Left ventricle myocardium superior (tissue), 1 donor: ENCODE measurements at regions of chr12 and their contacts with region 1.

Region 1: DNA sequence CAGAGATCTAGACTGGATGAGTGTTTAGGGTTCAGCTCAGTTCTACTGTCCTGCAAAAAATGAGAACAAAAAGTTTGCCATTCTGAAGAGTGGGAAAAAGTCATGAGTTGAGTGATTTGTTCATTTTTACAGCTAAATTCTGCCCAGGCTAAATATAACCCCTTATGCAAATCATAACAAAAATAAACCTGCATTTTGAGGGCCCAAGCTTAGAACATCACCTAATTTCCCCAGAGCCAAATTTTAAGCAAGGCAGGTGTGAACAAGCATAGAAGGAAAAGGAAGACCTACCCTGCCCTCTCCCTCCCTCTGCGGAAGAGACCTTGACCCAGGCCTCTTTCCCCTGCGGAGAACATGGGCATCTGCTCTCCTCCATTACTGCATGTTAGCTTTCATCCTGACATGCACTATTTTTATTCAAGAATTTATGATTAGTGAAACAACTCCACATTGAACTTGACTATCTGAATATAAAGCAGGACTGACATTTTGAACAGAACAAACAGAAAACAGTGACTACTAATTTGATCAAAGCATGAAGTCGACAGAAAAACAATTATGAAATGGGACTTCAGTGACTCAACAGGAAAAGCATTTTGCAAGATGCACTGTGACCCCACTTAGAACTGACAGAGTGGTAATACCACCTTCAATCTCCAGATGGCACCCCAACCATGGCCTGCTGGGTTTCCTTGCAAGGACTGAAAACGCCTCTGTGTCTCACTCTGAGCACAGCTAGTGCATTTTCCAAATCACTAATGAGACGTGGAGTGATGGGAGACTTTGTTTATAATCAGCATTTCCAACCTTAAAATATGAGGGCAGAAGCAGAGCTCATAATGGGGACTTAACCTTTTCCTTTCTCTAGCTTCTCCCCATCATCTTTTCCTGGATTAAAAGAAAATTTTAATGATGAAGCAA is 30.9 kb upstream of the SELPLG start:
- DNase-seq: peak; percentile 68
- ATAC-seq: peak; percentile 90

Region 2: GRCh38 chr12:108803428-108804105 is 139.0 kb after region 1 on chr12:
- intact Hi-C with region 1: loop called (anchors 2 kb)
- DNase-seq: no peak
- ATAC-seq: peak; percentile 74